H1 (cell line): ENCODE measurements at regions of chr17 and their contacts with region 1.

Region 1: DNA sequence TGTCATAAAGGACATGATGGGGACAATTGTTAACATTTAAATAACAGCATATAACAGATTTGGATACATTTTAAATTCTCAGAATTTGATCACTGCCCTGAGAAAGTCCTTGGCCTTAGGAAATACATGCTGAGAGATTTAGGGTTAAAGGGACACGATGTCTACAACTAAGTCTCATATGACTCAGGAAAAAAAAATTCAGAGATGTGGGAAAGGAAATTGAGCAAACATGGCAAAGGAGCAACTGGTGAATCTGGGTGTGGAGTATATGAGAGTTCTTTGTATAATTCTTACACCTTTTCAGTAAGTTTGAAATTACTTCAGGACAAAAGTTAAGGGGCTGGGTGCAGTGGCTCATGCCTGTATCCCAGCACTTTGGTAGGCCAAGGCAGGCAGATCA is 18.2 kb downstream of the MPP3 start:
- DNase-seq: no peak
- H3K4me3 ChIP-seq: no peak overlapping the region
- H3K27ac ChIP-seq: no peak overlapping the region
- H3K4me1 ChIP-seq: peaks cover 0 to 4% (median 1%) of the 10 kb centered on the region in 4 experiments; a peak in 1 of 7 replicates
- H3K27me3 ChIP-seq: no peaks in the 10 kb centered on the region
- CTCF ChIP-seq: no peak
- EP300 ChIP-seq: no peak
- POLR2A ChIP-seq: no peak
- RAD21 ChIP-seq: no peak

Region 2: DNA sequence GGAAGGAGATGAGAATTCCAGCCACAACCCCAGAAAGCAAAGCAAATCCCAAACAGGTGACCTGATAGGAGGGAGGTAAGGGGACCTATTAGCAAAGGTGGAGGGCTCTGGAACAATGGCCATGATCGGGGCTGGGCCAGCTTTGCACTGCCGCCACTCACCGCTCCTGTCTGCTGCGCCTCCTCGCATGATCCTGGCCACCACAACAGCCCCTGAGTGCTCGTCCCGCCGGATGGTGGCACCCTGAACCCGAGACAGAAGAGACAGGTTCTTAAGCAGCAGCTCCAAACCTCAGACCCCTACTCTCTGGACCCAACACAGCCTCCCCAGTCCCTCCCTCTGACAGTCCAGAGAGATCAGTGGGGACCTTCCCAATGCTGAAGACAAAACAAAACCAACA is 12.9 kb after region 1 on chr17:
- CTCF ChIA-PET with region 1: interaction called, 16 read pairs
- POLR2A ChIA-PET with region 1: interaction called, 5 read pairs
- DNase-seq: no peak
- H3K4me3 ChIP-seq: no peak overlapping the region
- H3K27ac ChIP-seq: no peak overlapping the region; the same call in 1 of the 2 replicates
- H3K4me1 ChIP-seq: peaks cover 0 to 8% (median 4%) of the 10 kb centered on the region in 4 experiments; a peak in 4 of 7 replicates
- H3K27me3 ChIP-seq: peaks cover 0 to 4% (median 0%) of the 10 kb centered on the region in 4 experiments; a peak in 2 of 7 replicates
- CTCF ChIP-seq: no peak
- EP300 ChIP-seq: no peak
- POLR2A ChIP-seq: no peak
- RAD21 ChIP-seq: no peak

Region 3: DNA sequence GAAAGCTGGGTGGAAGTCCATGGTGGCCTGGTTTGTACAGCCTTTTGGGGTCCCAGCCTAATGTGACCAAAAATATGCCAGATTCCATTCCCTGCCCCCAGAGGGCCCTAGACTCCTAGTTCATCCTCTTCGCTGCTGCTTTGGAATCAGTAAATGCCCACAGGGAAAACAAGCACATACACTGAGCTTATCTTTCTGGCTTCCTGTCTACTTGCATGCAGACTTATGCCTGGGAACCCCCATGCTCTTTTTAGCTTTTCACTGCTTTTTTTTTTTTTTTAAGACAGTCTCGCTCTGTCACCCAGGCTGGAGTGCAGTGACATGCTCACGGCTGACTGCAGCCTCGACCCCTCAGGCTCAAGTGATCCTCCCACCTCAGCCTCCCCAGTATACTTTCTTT is 26.1 kb after region 1 on chr17:
- CTCF ChIA-PET with region 1: interaction called, 20 read pairs
- POLR2A ChIA-PET with region 1: interaction called, 3 read pairs
- DNase-seq: no peak
- H3K4me3 ChIP-seq: no peak overlapping the region
- H3K27ac ChIP-seq: no peak overlapping the region
- H3K4me1 ChIP-seq: no peaks in the 10 kb centered on the region
- H3K27me3 ChIP-seq: peaks cover 0 to 1% (median 0%) of the 10 kb centered on the region in 4 experiments; a peak in 2 of 7 replicates
- CTCF ChIP-seq: peak; percentile 26 to 63 (median 52)
- EP300 ChIP-seq: no peak
- POLR2A ChIP-seq: no peak
- RAD21 ChIP-seq: peak; percentile 39 to 56

Region 4: DNA sequence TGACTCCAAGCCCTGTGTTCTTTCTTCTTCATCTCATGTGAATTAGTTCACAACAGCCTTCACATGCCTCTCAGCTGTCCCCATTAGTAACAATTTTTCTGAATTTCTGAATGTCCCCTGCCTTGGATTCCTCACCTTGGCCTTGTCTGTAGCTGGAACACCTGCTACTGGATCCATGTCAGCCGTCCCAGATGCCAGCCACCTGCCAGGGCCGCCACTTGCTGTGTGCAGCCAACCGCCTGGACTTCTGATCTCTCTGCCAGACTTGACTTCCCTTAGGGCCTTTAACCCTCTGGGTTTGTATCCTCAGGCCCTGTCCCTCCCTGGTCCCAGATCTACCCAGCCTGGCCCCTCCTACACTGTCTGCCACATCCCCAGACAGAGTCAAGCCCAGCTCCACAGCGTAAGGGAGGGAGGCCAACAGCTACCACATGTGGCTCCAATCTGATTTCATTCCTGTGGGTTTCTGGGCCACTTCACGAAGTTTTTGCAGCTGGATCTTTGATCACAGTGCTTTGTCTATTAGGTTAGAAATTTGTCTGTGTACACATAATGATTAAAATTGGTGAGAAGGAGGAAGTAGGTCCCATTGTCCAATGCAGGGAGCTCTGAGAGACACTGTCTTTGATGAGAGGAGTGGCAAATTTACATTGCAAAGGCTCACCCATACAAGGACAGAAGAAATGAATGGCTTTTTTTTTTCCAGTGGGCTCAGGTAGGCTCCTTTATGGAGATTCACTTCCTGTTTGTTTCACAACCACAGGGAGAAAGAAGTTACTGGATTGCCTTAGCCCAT is 77.3 kb after region 1 on chr17:
- CTCF ChIA-PET with region 1: no interaction called
- POLR2A ChIA-PET with region 1: no interaction called
- DNase-seq: no peak
- H3K4me3 ChIP-seq: peak overlapping the region in 1 of 4 experiments; percentile 8; a peak in 1 of 8 replicates
- H3K27ac ChIP-seq: no peak overlapping the region
- H3K4me1 ChIP-seq: peaks cover 9 to 17% (median 14%) of the 10 kb centered on the region in 4 experiments
- H3K27me3 ChIP-seq: no peaks in the 10 kb centered on the region
- CTCF ChIP-seq: no peak
- EP300 ChIP-seq: no peak
- POLR2A ChIP-seq: no peak
- RAD21 ChIP-seq: no peak

Region 5: DNA sequence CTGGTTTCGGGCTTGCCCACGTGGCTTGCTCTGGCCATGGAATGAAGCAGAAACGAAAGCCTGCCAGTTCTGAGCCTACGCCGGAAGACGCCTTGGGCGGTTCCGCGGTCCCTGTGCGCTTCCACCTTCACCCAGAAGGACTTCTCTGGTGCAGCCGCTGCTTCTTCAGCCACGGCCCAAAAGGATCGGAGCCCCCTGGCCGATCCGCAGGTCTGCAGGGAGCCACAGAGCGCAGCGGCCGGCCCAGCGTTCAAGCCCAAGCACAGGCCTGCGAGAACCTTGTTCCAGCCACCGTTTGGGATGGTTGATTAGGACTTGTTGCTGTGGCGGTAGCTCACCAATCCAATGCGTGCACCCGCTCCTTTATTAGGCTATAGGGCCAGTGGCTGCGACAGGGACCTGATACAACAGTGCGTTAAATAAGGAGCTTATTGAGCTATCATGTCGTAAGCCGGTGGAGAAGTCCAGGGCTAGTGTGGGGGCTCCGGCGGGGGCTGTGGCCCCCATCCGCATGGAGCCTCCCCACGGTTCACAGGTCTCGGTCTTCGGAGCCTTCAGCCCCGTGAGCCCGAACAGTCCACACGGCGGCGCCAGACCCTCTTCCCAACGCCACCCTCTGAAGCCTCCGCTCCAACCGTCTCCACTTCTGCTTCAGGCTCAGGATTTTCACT is 102.8 kb after region 1 on chr17:
- CTCF ChIA-PET with region 1: no interaction called
- POLR2A ChIA-PET with region 1: no interaction called
- DNase-seq: peak in 1 of 2 experiments; percentile 84
- H3K4me3 ChIP-seq: peak overlapping the region; percentile 16 to 52 (median 26); a peak in 5 of 8 replicates
- H3K27ac ChIP-seq: no peak overlapping the region
- H3K4me1 ChIP-seq: peaks cover 0 to 8% (median 6%) of the 10 kb centered on the region in 4 experiments; a peak in 5 of 7 replicates
- H3K27me3 ChIP-seq: peaks cover 0 to 9% (median 7%) of the 10 kb centered on the region in 4 experiments; a peak in 5 of 7 replicates
- CTCF ChIP-seq: peak; percentile 74 to 81 (median 79)
- EP300 ChIP-seq: no peak
- POLR2A ChIP-seq: no peak; a peak in 1 of 3 replicates
- RAD21 ChIP-seq: peak; percentile 57 to 68